A549 (cell line): ENCODE measurements at regions of chr12 and their contacts with region 1.

Region 1: GRCh38 chr12:111024205-111024801 is 103.9 kb upstream of the MYL2 start:
- DNase-seq: peak; percentile 61 to 85
- ATAC-seq: peak; percentile 90 to 99
- H3K4me3 ChIP-seq: no peak overlapping the region
- H3K27ac ChIP-seq: no peak overlapping the region
- H3K4me1 ChIP-seq: no peaks in the 10 kb centered on the region; the same call in 2 of the 3 replicates
- CTCF ChIP-seq: peak; percentile 90
- EP300 ChIP-seq: no peak
- POLR2A ChIP-seq: no peak
- RAD21 ChIP-seq: peak; percentile 95 to 98

Region 2: DNA sequence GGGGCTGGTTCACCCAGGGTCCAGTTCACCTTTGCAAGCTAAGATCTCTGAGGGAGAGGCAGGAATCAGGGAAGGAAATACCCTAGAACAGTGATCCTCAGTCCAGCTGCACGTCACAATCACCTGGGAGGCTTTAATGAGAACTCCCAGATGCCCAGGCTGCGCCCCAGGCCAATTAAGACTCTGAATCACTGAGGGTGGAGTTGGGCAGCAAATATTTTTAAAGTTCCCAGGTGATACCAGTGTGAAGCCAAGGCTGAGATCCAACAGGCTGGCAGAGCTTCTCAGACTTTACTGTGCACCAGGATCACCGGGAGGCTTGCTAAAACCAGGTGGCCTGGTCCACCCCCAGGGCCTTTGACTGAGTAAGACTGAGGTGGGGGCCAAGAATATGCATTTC is 127.7 kb before region 1 on chr12:
- CTCF ChIA-PET with region 1: interaction called, 25 read pairs
- POLR2A ChIA-PET with region 1: no interaction called
- DNase-seq: no peak
- ATAC-seq: no peak
- H3K4me3 ChIP-seq: no peak overlapping the region
- H3K27ac ChIP-seq: no peak overlapping the region; a peak in 1 of 6 replicates
- H3K4me1 ChIP-seq: peaks cover 9% of the 10 kb centered on the region
- CTCF ChIP-seq: no peak
- EP300 ChIP-seq: no peak
- POLR2A ChIP-seq: no peak
- RAD21 ChIP-seq: no peak

Region 3: DNA sequence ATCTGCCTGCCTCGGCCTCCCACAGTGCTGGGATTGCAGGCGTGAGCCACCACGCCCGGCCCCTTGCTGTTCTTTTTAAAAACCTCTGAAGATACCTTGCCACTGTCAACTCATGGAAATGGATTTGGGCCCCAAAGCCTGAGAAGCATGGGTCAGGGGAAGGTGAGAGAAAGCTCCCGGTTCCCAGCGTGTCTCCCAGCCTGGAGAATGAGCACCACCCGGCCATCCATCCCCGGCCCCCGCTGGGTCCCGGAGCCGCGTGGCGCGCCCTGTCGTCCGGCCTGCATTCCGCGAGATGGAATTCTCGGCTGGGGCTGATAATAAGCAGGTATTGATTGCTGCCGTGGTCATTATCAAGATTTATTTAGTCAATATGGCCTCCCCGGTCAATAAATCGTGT is 22.6 kb after region 1 on chr12:
- CTCF ChIA-PET with region 1: interaction called, 16 read pairs
- POLR2A ChIA-PET with region 1: no interaction called
- DNase-seq: no peak
- ATAC-seq: no peak
- H3K4me3 ChIP-seq: no peak overlapping the region
- H3K27ac ChIP-seq: no peak overlapping the region
- H3K4me1 ChIP-seq: no peaks in the 10 kb centered on the region
- CTCF ChIP-seq: no peak
- EP300 ChIP-seq: no peak
- POLR2A ChIP-seq: no peak
- RAD21 ChIP-seq: no peak

Region 4: GRCh38 chr12:111160350-111161241 is 136.3 kb after region 1 on chr12:
- CTCF ChIA-PET with region 1: interaction called, 13 read pairs
- POLR2A ChIA-PET with region 1: no interaction called
- DNase-seq: no peak
- ATAC-seq: peak in 1 of 2 experiments; percentile 32; a peak in 3 of 6 replicates
- H3K4me3 ChIP-seq: no peak overlapping the region
- H3K27ac ChIP-seq: no peak overlapping the region
- H3K4me1 ChIP-seq: no peaks in the 10 kb centered on the region
- CTCF ChIP-seq: no peak
- EP300 ChIP-seq: no peak
- POLR2A ChIP-seq: no peak
- RAD21 ChIP-seq: no peak

Region 5: DNA sequence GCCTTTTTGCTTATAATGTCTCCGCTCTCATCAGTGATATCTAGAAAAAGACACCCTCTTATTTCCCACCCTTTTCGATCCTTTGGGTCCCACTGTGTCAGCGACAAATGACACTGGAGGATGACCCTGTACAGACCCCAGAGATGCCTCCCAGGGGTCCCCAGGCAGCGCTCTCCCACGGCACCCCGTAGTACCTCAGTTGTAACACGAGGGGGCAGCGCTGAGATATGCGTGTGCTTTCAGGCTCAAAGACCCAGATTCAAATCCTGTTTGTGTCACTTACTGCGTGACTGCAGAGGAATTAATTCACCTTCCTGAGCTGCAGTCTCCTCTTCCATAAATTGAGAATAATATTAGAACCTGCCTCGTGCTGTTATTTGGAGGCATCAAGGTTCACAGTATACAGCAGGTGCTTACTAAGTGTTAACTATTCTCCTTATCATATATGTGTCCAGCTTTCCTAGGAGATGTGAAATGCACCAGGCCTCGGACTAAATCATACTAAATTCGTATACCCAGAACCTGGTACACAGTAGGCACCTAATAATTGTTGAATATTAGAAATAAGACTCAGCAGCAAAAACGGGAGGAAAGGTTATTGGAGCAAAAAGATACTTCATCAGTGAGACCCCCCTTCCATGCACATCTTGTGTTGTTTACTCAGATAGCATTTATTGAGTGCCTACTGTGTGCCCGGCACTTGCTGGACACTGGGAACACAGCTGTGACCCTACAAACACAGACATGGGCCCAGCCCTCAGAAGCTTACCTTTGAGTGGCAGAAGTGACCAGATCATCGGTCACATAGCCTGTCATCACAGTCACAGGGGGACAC is 244.7 kb after region 1 on chr12:
- CTCF ChIA-PET with region 1: interaction called, 37 read pairs
- POLR2A ChIA-PET with region 1: no interaction called
- DNase-seq: no peak
- ATAC-seq: peak in 1 of 2 experiments; percentile 43; a peak in 2 of 6 replicates
- H3K4me3 ChIP-seq: no peak overlapping the region
- H3K27ac ChIP-seq: no peak overlapping the region
- H3K4me1 ChIP-seq: peaks cover 8% of the 10 kb centered on the region; the same call in 1 of the 3 replicates
- CTCF ChIP-seq: peak; percentile 48
- EP300 ChIP-seq: no peak
- POLR2A ChIP-seq: no peak
- RAD21 ChIP-seq: peak in 1 of 2 experiments; percentile 54; a peak in 3 of 5 replicates

Region 6: DNA sequence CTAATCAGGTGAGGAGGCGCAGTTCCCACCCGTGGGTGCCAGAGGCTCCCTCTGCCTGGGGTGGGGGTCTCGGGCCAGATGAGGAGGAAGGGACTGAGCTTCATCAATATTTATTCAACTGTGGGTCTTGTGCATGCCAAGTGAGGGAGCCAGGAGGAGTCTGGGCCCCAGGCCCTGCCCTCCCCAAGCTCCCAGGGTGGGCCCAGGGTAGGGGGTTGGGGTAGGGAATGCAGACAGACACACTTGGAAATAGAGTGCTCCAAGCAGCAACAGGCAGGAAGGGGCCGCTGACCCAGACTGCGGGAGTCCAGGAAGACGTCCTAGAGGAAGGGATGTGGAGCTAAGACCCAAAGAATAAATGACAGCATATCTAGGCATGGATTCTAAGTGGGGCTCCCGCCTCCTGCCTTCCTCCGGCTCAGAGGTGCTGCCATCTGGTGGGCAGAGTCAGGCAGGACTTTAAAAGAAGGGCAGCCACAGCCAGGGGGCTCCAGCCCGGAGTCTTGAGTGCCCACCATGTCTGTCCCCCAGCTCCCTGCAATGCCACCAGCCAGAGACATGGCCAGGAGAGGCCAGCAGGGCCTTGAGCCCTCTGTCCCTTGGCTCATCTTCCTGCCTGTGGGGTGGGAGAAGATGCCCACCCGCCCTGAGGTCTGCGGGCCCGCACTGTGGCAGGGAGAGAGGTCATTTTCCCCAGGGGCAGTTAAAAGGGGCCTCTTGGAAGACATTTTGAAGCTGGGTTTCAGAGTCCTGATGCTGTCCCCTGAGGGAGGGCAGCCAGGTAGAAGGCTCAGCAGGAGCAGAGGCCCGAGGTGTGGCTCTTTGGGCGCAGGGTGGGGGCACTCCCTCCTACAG is 274.5 kb after region 1 on chr12:
- CTCF ChIA-PET with region 1: interaction called, 124 read pairs
- POLR2A ChIA-PET with region 1: no interaction called
- DNase-seq: peak; percentile 64 to 74
- ATAC-seq: peak; percentile 85 to 95
- H3K4me3 ChIP-seq: no peak overlapping the region
- H3K27ac ChIP-seq: no peak overlapping the region
- H3K4me1 ChIP-seq: no peaks in the 10 kb centered on the region
- CTCF ChIP-seq: peak; percentile 85
- EP300 ChIP-seq: no peak
- POLR2A ChIP-seq: no peak
- RAD21 ChIP-seq: peak; percentile 67 to 79